ENCODE measurements at regions of chr14 and their contacts with region 1.

Region 1: GRCh38 chr14:77301103-77301502 is 19.6 kb downstream of the POMT2 start:
- DNase-seq: peak; percentile 81 to 82
- H3K4me3 ChIP-seq: no peak overlapping the region
- H3K4me3 Mint-ChIP-seq: no peak overlapping the region
- H3K27ac Mint-ChIP-seq: no peak overlapping the region
- H3K4me1 ChIP-seq: peaks cover 21% of the 10 kb centered on the region; the same call in 1 of the 2 replicates
- H3K4me1 Mint-ChIP-seq: peaks cover 18% of the 10 kb centered on the region
- H3K27me3 ChIP-seq: no peaks in the 10 kb centered on the region
- H3K27me3 Mint-ChIP-seq: no peaks in the 10 kb centered on the region
- CTCF ChIP-seq: peak; percentile 84 to 90

Region 2: GRCh38 chr14:77268989-77269600 is 32.0 kb before region 1 on chr14:
- CTCF ChIA-PET with region 1: no interaction called
- POLR2A ChIA-PET with region 1: no interaction called
- intact Hi-C with region 1: no loop called
- DNase-seq: no peak
- H3K4me3 ChIP-seq: no peak overlapping the region
- H3K4me3 Mint-ChIP-seq: no peak overlapping the region
- H3K27ac Mint-ChIP-seq: no peak overlapping the region
- H3K4me1 ChIP-seq: no peaks in the 10 kb centered on the region
- H3K4me1 Mint-ChIP-seq: no peaks in the 10 kb centered on the region
- H3K27me3 ChIP-seq: no peaks in the 10 kb centered on the region
- H3K27me3 Mint-ChIP-seq: no peaks in the 10 kb centered on the region
- CTCF ChIP-seq: no peak

Region 3: DNA sequence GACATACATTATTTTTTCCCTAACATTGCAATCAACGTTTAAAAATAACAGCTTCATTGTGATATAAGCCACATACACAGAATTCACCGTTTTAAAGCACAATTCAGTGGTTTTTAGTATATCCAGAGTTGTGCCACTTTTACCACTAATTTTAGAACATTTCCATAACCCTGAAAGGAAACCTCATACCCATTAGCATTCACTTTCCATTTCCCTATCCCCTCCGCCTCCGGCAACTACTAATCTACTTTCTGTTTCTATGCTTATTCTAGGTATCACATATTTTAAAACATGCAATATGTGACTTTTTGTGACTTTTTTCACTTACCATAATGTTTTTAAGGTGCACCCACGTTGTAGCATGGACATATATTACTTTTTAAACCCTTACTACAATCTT is 253.1 kb after region 1 on chr14:
- CTCF ChIA-PET with region 1: no interaction called
- POLR2A ChIA-PET with region 1: no interaction called
- intact Hi-C with region 1: loop called (anchors 1 kb)
- DNase-seq: no peak
- H3K4me3 ChIP-seq: no peak overlapping the region
- H3K4me3 Mint-ChIP-seq: no peak overlapping the region
- H3K27ac Mint-ChIP-seq: no peak overlapping the region
- H3K4me1 ChIP-seq: no peaks in the 10 kb centered on the region
- H3K4me1 Mint-ChIP-seq: no peaks in the 10 kb centered on the region
- H3K27me3 ChIP-seq: no peaks in the 10 kb centered on the region
- H3K27me3 Mint-ChIP-seq: no peaks in the 10 kb centered on the region
- CTCF ChIP-seq: no peak

Region 4: GRCh38 chr14:78016532-78016931 is 715.4 kb after region 1 on chr14:
- CTCF ChIA-PET with region 1: no interaction called
- POLR2A ChIA-PET with region 1: no interaction called
- intact Hi-C with region 1: no loop called
- DNase-seq: no peak
- H3K4me3 ChIP-seq: no peak overlapping the region
- H3K4me3 Mint-ChIP-seq: no peak overlapping the region
- H3K27ac Mint-ChIP-seq: no peak overlapping the region
- H3K4me1 ChIP-seq: no peaks in the 10 kb centered on the region
- H3K4me1 Mint-ChIP-seq: no peaks in the 10 kb centered on the region
- H3K27me3 ChIP-seq: no peaks in the 10 kb centered on the region
- H3K27me3 Mint-ChIP-seq: peaks cover 27% of the 10 kb centered on the region
- CTCF ChIP-seq: no peak